PC-9 (cell line): ENCODE measurements at regions of chr4 and their contacts with region 1.

Region 1: DNA sequence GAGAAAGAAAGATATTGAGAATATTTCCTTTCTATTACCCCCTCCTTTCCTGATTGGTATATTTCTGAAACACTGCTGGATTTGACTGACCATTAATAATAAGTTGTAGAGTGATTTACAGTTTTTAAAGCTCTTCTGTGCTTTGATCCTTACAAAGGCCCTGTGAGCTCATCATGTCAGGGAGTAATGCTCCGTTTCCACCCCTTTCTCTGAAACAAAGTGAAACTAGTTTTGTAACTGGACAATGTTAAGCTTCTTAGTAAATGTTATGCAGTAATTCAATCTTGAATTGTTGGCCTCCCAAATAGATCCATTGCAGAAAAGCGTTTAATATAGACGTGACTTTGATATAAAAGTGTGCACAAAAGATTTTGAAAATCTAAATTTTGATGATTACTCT is 190.1 kb upstream of the GNPDA2 start:
- DNase-seq: no peak
- H3K4me3 ChIP-seq: peak overlapping the region; percentile 50
- H3K27ac ChIP-seq: no peak overlapping the region
- H3K4me1 ChIP-seq: no peaks in the 10 kb centered on the region
- H3K27me3 ChIP-seq: no peaks in the 10 kb centered on the region
- CTCF ChIP-seq: no peak

Region 2: DNA sequence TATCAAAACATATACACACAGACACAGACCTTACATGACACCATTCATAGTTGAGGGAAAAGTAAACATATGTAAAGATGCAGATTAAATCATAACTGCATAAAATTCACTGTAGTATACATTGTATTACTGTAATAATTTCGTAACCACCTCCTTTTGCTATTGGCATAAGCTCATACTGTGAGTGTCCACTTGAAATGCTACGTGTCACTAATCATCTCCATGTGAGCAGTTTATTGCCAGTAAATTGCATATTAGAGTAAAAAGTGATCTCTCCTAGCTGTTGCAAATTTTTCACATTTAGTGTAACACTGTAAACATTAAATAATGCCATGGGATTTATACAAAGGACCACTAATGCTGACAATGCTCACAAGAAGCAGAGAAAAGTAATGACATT is 66.7 kb after region 1 on chr4:
- CTCF ChIA-PET with region 1: no interaction called
- POLR2A ChIA-PET with region 1: interaction called, 10 read pairs
- intact Hi-C with region 1: no loop called
- DNase-seq: no peak
- H3K4me3 ChIP-seq: no peak overlapping the region
- H3K27ac ChIP-seq: no peak overlapping the region
- H3K4me1 ChIP-seq: no peaks in the 10 kb centered on the region
- H3K27me3 ChIP-seq: no peaks in the 10 kb centered on the region
- CTCF ChIP-seq: no peak

Region 3: GRCh38 chr4:45241976-45242375 is 325.6 kb after region 1 on chr4:
- CTCF ChIA-PET with region 1: no interaction called
- POLR2A ChIA-PET with region 1: no interaction called
- intact Hi-C with region 1: no loop called
- DNase-seq: no peak
- H3K4me3 ChIP-seq: no peak overlapping the region
- H3K27ac ChIP-seq: no peak overlapping the region
- H3K4me1 ChIP-seq: no peaks in the 10 kb centered on the region
- H3K27me3 ChIP-seq: no peaks in the 10 kb centered on the region
- CTCF ChIP-seq: no peak